K562 (cell line): ENCODE measurements at regions of chr11 and their contacts with region 1.

Region 1: GRCh38 chr11:33362051-33362910 is 105.1 kb downstream of the HIPK3 start:
- DNase-seq: peak in 2 of 4 experiments; percentile 27 to 45
- ATAC-seq: peak; percentile 81
- H3K4me3 ChIP-seq: no peak overlapping the region
- H3K27ac ChIP-seq: no peak overlapping the region
- H3K4me1 ChIP-seq: no peaks in the 10 kb centered on the region
- H3K27me3 ChIP-seq: peaks cover 0 to 2% of the 10 kb centered on the region in 2 experiments; a peak in 3 of 5 replicates
- CTCF ChIP-seq: peak; percentile 30 to 73 (median 53); a peak in 5 of 6 replicates
- EP300 ChIP-seq: no peak
- POLR2A ChIP-seq: no peak
- RAD21 ChIP-seq: peak; percentile 62 to 73

Region 2: DNA sequence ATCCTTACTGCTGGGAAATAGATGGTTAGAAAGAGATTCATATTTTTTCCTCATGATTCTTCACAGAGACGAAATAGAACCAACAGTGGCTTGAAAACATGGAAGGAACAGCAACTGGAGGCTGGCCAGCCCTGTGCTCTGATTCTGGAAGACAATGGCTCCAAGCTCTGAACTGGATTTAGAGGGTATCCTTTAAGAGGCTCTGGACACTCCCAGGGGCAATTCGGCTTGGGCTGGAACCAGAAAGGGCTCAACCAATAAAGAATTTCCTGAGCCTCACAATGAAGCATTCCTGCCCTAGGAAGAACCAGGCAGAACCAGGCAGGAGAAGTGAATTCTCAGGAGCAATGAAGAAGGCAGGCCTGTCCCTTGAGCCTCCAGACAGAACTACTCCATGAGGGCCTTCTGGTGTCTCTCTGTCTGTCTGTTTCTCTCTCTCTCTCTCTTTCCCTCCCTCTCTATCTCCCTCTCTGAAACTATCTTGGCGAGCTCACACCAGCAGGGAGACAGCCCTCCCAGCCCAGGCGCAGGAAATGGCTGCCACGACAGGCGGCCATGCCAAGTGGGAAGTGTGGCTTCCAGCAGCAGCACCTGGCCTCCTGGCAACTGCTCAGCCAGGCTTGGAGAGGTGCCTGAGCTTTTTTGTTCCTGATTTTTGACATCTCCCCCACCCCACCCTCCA is 1178.1 kb before region 1 on chr11:
- CTCF ChIA-PET with region 1: no interaction called
- POLR2A ChIA-PET with region 1: no interaction called
- in situ Hi-C with region 1: no loop called
- intact Hi-C with region 1: no loop called
- DNase-seq: no peak
- ATAC-seq: no peak
- H3K4me3 ChIP-seq: no peak overlapping the region
- H3K27ac ChIP-seq: no peak overlapping the region
- H3K4me1 ChIP-seq: no peaks in the 10 kb centered on the region
- H3K27me3 ChIP-seq: peaks cover 0 to 7% of the 10 kb centered on the region in 2 experiments; a peak in 2 of 5 replicates
- CTCF ChIP-seq: no peak
- EP300 ChIP-seq: no peak
- POLR2A ChIP-seq: no peak
- RAD21 ChIP-seq: no peak

Region 3: GRCh38 chr11:33687733-33688479 is 325.6 kb after region 1 on chr11:
- CTCF ChIA-PET with region 1: interaction called, 12 read pairs
- POLR2A ChIA-PET with region 1: no interaction called
- in situ Hi-C with region 1: loop called (anchors 5 kb)
- intact Hi-C with region 1: loop called (anchors 1 kb)
- DNase-seq: peak; percentile 40 to 72 (median 59)
- ATAC-seq: peak; percentile 80
- H3K4me3 ChIP-seq: no peak overlapping the region
- H3K27ac ChIP-seq: no peak overlapping the region
- H3K4me1 ChIP-seq: peaks cover 5 to 10% of the 10 kb centered on the region in 2 experiments; a peak in 4 of 5 replicates
- H3K27me3 ChIP-seq: peaks cover 3 to 18% of the 10 kb centered on the region in 2 experiments; a peak in 4 of 5 replicates
- CTCF ChIP-seq: peak; percentile 77 to 89 (median 79)
- EP300 ChIP-seq: no peak
- POLR2A ChIP-seq: no peak
- RAD21 ChIP-seq: peak; percentile 70 to 94